ENCODE measurements at regions of chr1 and their contacts with region 1.

Region 1: DNA sequence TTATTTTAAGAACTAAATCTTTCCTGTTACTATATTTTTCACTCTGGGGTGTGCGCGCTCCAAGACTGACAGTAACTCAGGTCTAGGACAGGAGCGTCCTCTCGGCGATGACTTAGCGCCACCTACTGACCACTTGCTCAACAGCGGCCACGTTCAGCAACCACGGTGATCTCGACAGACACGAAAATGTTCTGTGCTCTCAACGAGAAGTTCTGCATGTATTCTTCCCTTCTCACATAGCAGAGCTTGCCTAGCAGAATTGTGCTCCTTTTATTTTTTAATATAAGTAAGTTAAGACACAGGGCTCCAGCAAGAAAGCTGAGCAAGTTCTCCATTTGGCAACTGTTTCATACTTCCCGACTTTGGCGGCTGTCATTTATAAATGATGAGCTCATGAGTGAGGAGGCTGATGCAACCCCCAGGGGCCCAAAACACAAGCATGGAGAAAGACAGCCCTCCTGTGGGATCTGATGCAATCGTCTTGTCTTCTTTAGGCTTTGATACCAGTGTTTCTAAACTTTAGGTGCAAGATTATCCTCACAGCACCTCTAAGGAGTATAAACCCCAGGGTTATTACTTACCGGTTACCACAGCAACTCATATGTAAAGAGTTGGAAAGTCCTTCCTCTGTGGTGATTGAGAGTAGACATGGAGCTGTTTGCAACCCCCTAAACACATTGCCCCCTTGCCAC is 92.6 kb downstream of the HHIPL2 start:
- DNase-seq: peak; percentile 63
- ATAC-seq: peak; percentile 97
- H3K4me3 Mint-ChIP-seq: peak overlapping the region; percentile 1
- H3K27ac Mint-ChIP-seq: peak overlapping the region; percentile 20
- H3K4me1 Mint-ChIP-seq: peaks cover 12% of the 10 kb centered on the region
- H3K27me3 Mint-ChIP-seq: peaks cover 1% of the 10 kb centered on the region
- CTCF ChIP-seq: peak; percentile 85

Region 2: GRCh38 chr1:220873868-220874655 is 1581.3 kb before region 1 on chr1:
- CTCF ChIA-PET with region 1: interaction called, 20 read pairs
- POLR2A ChIA-PET with region 1: no interaction called
- intact Hi-C with region 1: loop called (anchors 1 kb)
- DNase-seq: peak; percentile 36
- ATAC-seq: no peak
- H3K4me3 Mint-ChIP-seq: no peak overlapping the region
- H3K27ac Mint-ChIP-seq: no peak overlapping the region
- H3K4me1 Mint-ChIP-seq: peaks cover 30% of the 10 kb centered on the region
- H3K27me3 Mint-ChIP-seq: peaks cover 2% of the 10 kb centered on the region
- CTCF ChIP-seq: no peak

Region 3: DNA sequence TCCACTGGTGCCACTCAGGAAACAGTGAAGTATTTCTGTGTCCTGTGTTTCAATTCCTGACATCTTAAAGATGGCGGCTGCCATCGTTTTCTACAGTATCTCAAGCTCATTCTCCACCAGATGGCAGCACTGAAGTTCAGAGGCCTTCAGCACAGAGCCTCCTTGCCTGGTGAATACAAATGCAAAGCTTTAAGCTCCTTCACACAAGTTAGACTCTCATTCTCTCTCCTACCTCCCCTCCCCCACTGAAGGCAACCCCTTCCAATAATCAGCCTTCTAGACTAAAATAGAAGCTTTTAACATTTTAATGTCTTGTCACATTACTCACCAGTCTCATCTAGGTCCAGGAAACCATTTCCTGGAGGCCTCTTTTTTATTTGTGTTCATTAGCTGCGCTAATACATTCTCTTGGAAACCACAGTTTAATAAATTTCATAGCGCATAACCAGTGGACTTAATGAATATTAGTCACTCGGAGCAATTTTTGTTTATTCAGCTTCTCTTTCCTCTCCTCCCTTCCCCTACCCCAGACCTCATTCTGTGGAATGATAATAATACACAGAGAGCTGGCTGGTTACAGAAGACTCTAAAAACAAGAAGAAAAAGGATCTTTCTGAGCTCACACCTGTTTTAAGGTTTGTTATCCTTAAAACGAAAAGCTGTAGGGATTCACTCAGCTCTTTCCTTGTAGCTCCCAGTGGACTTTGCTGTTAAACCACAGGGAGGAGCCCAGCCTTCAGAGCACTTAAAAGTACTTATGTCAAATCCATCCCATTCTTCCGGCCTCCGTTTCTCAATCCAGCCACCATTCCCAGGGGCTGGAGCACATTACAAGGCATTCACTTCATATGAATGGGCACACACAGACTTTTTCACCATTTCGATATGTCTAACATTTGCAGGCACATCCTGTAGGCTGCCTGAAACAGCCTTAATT is 1191.2 kb before region 1 on chr1:
- CTCF ChIA-PET with region 1: interaction called, 38 read pairs
- POLR2A ChIA-PET with region 1: no interaction called
- intact Hi-C with region 1: loop called (anchors 1 kb)
- DNase-seq: no peak
- ATAC-seq: peak; percentile 69
- H3K4me3 Mint-ChIP-seq: no peak overlapping the region
- H3K27ac Mint-ChIP-seq: no peak overlapping the region
- H3K4me1 Mint-ChIP-seq: no peaks in the 10 kb centered on the region
- H3K27me3 Mint-ChIP-seq: peaks cover 19% of the 10 kb centered on the region
- CTCF ChIP-seq: no peak

Region 4: GRCh38 chr1:221543529-221544120 is 911.7 kb before region 1 on chr1:
- CTCF ChIA-PET with region 1: interaction called, 4 read pairs
- POLR2A ChIA-PET with region 1: no interaction called
- intact Hi-C with region 1: loop called (anchors 10 kb)
- DNase-seq: no peak
- ATAC-seq: no peak
- H3K4me3 Mint-ChIP-seq: no peak overlapping the region
- H3K27ac Mint-ChIP-seq: no peak overlapping the region
- H3K4me1 Mint-ChIP-seq: no peaks in the 10 kb centered on the region
- H3K27me3 Mint-ChIP-seq: peaks cover under 1% of the 10 kb centered on the region
- CTCF ChIP-seq: no peak

Region 5: GRCh38 chr1:222171005-222171404 is 284.3 kb before region 1 on chr1:
- CTCF ChIA-PET with region 1: no interaction called
- POLR2A ChIA-PET with region 1: no interaction called
- intact Hi-C with region 1: loop called (anchors 1 kb)
- DNase-seq: no peak
- ATAC-seq: peak; percentile 52
- H3K4me3 Mint-ChIP-seq: no peak overlapping the region
- H3K27ac Mint-ChIP-seq: no peak overlapping the region
- H3K4me1 Mint-ChIP-seq: no peaks in the 10 kb centered on the region
- H3K27me3 Mint-ChIP-seq: peaks cover 16% of the 10 kb centered on the region
- CTCF ChIP-seq: no peak

Measured in activated B cell treated with CpG ODN at 0.5 μM for 24 hours (primary cell).